ENCODE measurements at regions of chr13 and their contacts with region 1.

Region 1: GRCh38 chr13:69524459-69525155 is 583.0 kb upstream of the ATXN8OS start:
- DNase-seq: no peak
- ATAC-seq: no peak
- H3K4me3 Mint-ChIP-seq: no peak overlapping the region
- H3K27ac Mint-ChIP-seq: no peak overlapping the region
- H3K4me1 Mint-ChIP-seq: no peaks in the 10 kb centered on the region
- H3K27me3 Mint-ChIP-seq: no peaks in the 10 kb centered on the region

Region 2: DNA sequence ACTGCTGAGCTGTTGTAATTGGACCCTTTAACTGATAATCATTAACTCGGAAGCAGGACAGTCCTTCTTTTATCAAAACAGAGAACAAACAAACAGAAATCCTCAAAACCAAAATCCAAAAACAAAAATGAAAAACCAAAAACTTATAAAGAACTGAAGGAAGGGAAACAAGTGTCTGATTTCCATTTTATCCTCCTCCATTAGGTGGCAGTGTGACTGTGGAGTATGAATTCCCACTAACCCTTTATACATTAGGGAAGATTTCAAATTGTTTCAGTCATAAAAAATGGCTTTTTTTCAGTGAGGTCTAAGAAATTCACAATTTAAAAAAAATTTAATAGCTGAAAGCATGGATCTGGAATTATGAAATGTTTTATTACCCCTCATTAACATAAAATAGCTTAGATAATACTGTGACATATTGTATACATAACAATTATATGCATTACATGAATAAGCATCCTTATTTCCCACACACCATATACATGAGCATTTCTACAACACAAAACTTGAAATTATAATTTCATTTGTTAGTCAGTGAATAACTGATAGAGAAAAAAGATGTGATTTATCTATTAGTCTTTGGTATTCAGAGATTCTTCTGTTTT is 1220.2 kb before region 1 on chr13:
- CTCF ChIA-PET with region 1: no interaction called
- POLR2A ChIA-PET with region 1: no interaction called
- intact Hi-C with region 1: loop called in 1 of 2 experiments (anchors 10 kb)
- DNase-seq: no peak
- ATAC-seq: no peak
- H3K4me3 Mint-ChIP-seq: no peak overlapping the region
- H3K27ac Mint-ChIP-seq: no peak overlapping the region
- H3K4me1 Mint-ChIP-seq: no peaks in the 10 kb centered on the region
- H3K27me3 Mint-ChIP-seq: no peaks in the 10 kb centered on the region

Region 3: GRCh38 chr13:69474011-69474685 is 50.5 kb before region 1 on chr13:
- CTCF ChIA-PET with region 1: no interaction called
- POLR2A ChIA-PET with region 1: no interaction called
- intact Hi-C with region 1: no loop called
- DNase-seq: no peak
- ATAC-seq: no peak
- H3K4me3 Mint-ChIP-seq: no peak overlapping the region
- H3K27ac Mint-ChIP-seq: no peak overlapping the region
- H3K4me1 Mint-ChIP-seq: no peaks in the 10 kb centered on the region
- H3K27me3 Mint-ChIP-seq: no peaks in the 10 kb centered on the region

Region 4: GRCh38 chr13:69648340-69649062 is 123.9 kb after region 1 on chr13:
- CTCF ChIA-PET with region 1: no interaction called
- POLR2A ChIA-PET with region 1: no interaction called
- intact Hi-C with region 1: no loop called
- DNase-seq: no peak
- ATAC-seq: no peak
- H3K4me3 Mint-ChIP-seq: no peak overlapping the region
- H3K27ac Mint-ChIP-seq: no peak overlapping the region
- H3K4me1 Mint-ChIP-seq: no peaks in the 10 kb centered on the region
- H3K27me3 Mint-ChIP-seq: no peaks in the 10 kb centered on the region